Activated CD8-positive, alpha-beta memory T cell treated with anti-CD3 and anti-CD28 coated beads, Interleukin-2, amount 10 ng/mL, durations not matched to agents 7 days and 5 days (primary cell): ENCODE measurements at regions of chr12 and their contacts with region 1.

Region 1: DNA sequence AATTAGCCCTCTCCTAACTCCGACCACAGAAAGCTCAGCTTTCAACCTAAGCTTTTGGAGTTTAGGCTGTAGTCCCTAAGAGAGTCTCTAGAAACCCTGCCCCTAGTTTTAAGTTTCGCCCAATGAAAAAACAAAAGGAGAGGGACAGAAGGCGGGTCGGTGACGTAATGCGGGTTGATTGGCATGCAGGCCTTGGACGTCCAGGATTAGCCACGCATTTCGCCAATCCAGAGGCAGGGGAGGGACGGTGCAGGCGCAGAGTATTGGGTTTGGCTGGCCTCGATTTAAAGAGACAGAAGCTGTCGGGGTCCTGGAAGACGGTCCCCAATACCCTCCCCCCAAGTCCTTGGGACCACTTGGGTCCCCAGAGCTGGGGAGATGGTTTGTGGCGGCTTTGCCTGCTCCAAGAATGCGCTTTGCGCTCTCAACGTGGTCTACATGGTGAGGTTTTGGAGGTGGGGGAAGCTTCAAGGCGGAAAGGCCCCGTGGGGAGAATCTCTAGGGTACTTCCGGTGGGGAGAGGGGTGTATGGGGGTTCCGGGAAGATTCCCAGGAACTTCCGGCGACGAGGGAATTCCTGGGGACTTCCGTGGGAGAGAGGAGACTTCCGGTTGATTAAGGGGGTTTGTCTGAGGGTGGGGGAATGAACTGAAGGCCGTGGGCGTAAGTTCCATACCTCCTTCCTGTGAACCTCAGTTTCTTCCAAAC is at the start of gene TSPAN31:
- DNase-seq: peak; percentile 98
- ATAC-seq: peak; percentile 83
- H3K4me3 Mint-ChIP-seq: peak within 1 kb of the TSS; percentile 85
- H3K27ac Mint-ChIP-seq: peak within 1 kb of the TSS; percentile 95
- H3K4me1 Mint-ChIP-seq: peaks cover 49% of the 10 kb centered on the region
- H3K27me3 Mint-ChIP-seq: no peaks in the 10 kb centered on the region
- total RNA-seq, gene TSPAN31: 10.0 to 19.4 TPM

Region 2: GRCh38 chr12:57693659-57694458 is 51.1 kb before region 1 on chr12 and contains the start of gene OS9:
- CTCF ChIA-PET with region 1: interaction called, 13 read pairs
- DNase-seq: peak; percentile 99
- ATAC-seq: peak; percentile 99
- H3K4me3 Mint-ChIP-seq: no peak within 1 kb of the TSS
- H3K27ac Mint-ChIP-seq: no peak within 1 kb of the TSS
- H3K4me1 Mint-ChIP-seq: peaks cover 3% of the 10 kb centered on the region
- H3K27me3 Mint-ChIP-seq: peaks cover 15% of the 10 kb centered on the region
- total RNA-seq, gene OS9: 117 to 123 TPM

Region 3: DNA sequence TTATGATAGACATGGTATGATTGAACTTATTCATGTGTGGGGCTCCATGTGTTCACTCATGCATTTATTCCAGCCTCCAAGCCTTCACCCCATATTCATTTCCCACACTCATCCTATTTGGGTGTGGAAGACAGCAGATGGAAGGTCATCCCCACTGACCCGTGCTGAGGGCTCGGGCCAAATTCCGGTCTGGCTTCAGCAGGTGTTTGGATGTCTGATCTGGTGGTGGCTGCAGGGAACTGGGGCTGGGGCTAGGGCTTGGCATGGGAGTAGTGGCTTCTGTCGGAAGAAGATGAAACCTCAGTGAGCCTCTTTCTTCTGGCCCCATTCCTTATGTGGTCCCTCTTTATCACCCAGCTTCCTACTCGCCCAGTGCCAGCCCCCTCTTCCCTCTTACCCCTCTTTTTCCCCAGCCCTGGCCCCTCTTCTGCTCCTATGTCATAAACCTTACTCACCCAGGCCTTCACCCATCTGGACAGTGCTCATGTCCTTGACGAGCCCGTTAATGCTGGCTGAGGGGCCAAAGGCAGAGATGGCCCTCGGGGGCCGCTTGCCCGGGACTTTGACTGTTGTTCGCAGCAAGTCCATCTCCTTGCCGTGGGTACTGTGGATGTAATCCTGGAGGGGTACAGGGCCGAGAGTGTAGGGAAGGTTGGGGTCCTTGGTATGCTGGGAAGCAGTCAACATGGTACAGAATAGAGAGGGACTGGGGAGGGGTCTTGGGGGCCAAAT is 14.4 kb before region 1 on chr12:
- CTCF ChIA-PET with region 1: interaction called, 13 read pairs
- DNase-seq: no peak
- ATAC-seq: no peak
- H3K4me3 Mint-ChIP-seq: no peak overlapping the region
- H3K27ac Mint-ChIP-seq: no peak overlapping the region
- H3K4me1 Mint-ChIP-seq: no peaks in the 10 kb centered on the region
- H3K27me3 Mint-ChIP-seq: no peaks in the 10 kb centered on the region